PC-9 (cell line): ENCODE measurements at regions of chr5 and their contacts with region 1.

Region 1: GRCh38 chr5:110008131-110008530 is 318.4 kb downstream of the MAN2A1 start:
- DNase-seq: no peak
- H3K4me3 ChIP-seq: no peak overlapping the region
- H3K27ac ChIP-seq: no peak overlapping the region
- H3K4me1 ChIP-seq: no peaks in the 10 kb centered on the region
- H3K27me3 ChIP-seq: no peaks in the 10 kb centered on the region
- CTCF ChIP-seq: no peak

Region 2: GRCh38 chr5:109748546-109748945 is 259.6 kb before region 1 on chr5:
- CTCF ChIA-PET with region 1: no interaction called
- POLR2A ChIA-PET with region 1: interaction called, 10 read pairs
- intact Hi-C with region 1: no loop called
- DNase-seq: no peak
- H3K4me3 ChIP-seq: no peak overlapping the region
- H3K27ac ChIP-seq: no peak overlapping the region
- H3K4me1 ChIP-seq: peaks cover 8% of the 10 kb centered on the region
- H3K27me3 ChIP-seq: no peaks in the 10 kb centered on the region
- CTCF ChIP-seq: no peak

Region 3: DNA sequence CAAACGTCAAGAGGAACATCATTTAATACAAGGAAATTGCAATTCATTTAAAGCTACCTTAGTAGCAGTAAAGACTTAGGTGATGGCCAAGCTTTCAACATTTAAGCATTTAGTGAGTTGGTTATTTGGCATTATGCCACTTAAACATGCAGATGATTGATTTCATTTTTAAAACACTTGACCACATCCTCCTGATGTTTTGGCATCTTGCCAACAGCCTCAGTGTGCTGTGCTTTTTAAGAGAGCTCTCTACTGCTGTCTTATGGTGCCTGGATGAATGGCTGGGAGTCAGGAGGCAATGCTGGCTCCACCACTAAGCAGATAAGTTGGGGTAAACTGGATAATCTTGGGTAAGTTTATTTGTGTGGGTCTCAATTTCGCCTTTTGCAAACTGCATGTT is 46.1 kb after region 1 on chr5:
- CTCF ChIA-PET with region 1: no interaction called
- POLR2A ChIA-PET with region 1: no interaction called
- intact Hi-C with region 1: no loop called
- DNase-seq: no peak
- H3K4me3 ChIP-seq: no peak overlapping the region
- H3K27ac ChIP-seq: no peak overlapping the region
- H3K4me1 ChIP-seq: no peaks in the 10 kb centered on the region
- H3K27me3 ChIP-seq: no peaks in the 10 kb centered on the region
- CTCF ChIP-seq: no peak